ENCODE measurements at regions of chr10 and their contacts with region 1.

Region 1: DNA sequence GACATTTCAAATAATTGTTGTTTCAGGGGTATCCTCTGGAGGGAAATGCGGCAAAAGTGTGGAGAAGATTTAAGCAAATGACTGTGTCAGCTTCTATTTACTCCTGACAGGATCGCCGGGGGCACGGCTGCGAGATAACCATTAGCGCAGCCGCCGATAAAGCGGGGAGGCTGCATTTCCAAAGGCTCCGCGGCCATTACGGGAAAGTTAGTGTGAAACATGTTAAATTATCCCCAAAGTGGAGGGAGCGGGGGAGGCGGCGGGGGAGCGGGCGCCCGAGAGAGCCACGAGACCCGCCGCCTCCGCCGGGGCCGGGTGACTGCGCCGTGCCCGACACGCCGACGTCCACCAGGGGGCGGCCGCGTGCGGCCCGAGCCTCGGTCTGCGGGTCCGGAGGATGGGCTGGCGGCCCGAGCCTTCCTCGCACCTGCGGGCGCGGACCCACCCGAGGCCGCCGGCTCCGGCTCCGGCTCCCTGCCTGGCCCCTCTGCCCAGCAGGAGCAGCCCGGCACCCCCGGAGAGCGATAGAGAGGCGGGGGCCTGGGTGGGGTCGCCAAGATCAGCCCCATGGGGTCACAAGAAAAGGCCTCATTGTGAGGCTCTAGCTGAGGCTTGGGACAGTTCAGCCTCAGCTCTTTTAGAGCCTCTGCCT is 74.4 kb upstream of the PAX2 start:
- DNase-seq: peak; percentile 67
- ATAC-seq: peak; percentile 82
- H3K4me3 Mint-ChIP-seq: peak overlapping the region; percentile 32
- H3K27ac Mint-ChIP-seq: no peak overlapping the region
- H3K4me1 Mint-ChIP-seq: peaks cover 8% of the 10 kb centered on the region
- H3K27me3 Mint-ChIP-seq: peaks cover 58% of the 10 kb centered on the region
- CTCF ChIP-seq: no peak

Region 2: GRCh38 chr10:100625816-100626215 is 45.1 kb before region 1 on chr10:
- CTCF ChIA-PET with region 1: no interaction called
- POLR2A ChIA-PET with region 1: no interaction called
- intact Hi-C with region 1: no loop called
- DNase-seq: no peak
- ATAC-seq: no peak
- H3K4me3 Mint-ChIP-seq: no peak overlapping the region
- H3K27ac Mint-ChIP-seq: no peak overlapping the region
- H3K4me1 Mint-ChIP-seq: no peaks in the 10 kb centered on the region
- H3K27me3 Mint-ChIP-seq: peaks cover 45% of the 10 kb centered on the region
- CTCF ChIP-seq: no peak

Region 3: GRCh38 chr10:100872034-100872791 is 201.3 kb after region 1 on chr10:
- CTCF ChIA-PET with region 1: interaction called, 5 read pairs
- POLR2A ChIA-PET with region 1: no interaction called
- intact Hi-C with region 1: loop called (anchors 1 kb)
- DNase-seq: peak; percentile 37
- ATAC-seq: peak; percentile 65
- H3K4me3 Mint-ChIP-seq: no peak overlapping the region
- H3K27ac Mint-ChIP-seq: no peak overlapping the region
- H3K4me1 Mint-ChIP-seq: no peaks in the 10 kb centered on the region
- H3K27me3 Mint-ChIP-seq: peaks cover 23% of the 10 kb centered on the region
- CTCF ChIP-seq: no peak

Region 4: GRCh38 chr10:100878291-100878910 is 207.4 kb after region 1 on chr10:
- CTCF ChIA-PET with region 1: interaction called, 6 read pairs
- POLR2A ChIA-PET with region 1: no interaction called
- intact Hi-C with region 1: loop called (anchors 1 kb)
- DNase-seq: no peak
- ATAC-seq: peak; percentile 77
- H3K4me3 Mint-ChIP-seq: no peak overlapping the region
- H3K27ac Mint-ChIP-seq: no peak overlapping the region
- H3K4me1 Mint-ChIP-seq: no peaks in the 10 kb centered on the region
- H3K27me3 Mint-ChIP-seq: peaks cover 11% of the 10 kb centered on the region
- CTCF ChIP-seq: no peak

Region 5: DNA sequence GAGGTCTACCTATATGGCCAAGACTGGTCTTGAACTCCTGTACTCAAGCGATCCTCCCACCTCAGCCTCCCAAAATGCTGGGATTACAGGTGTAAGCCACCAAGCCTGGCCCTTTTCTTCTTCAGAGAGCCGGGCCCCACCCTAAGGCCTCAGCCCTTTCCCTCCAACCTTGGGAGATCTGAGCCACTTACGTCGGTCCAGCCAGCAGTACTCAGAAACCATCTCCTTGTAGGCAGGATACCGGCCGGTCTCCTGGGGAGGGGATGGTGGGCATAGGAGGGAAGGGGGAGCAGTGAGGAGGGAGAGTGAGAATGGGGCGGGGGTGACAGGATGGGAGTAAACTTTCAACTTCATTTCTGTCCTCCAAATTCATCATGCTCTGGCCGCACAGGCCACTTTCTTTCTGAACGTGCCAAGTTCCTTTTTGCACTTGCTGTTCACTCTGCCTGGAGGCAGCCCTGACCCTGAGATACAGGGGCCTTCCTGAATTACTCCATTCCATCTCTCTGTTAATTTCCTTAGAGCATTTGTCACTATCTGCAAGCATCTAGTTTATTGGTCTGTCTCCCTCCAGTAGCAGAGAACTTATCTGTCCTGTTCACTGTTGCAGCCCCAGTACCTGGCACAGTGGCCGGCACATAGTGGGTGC is 349.6 kb after region 1 on chr10:
- CTCF ChIA-PET with region 1: no interaction called
- POLR2A ChIA-PET with region 1: no interaction called
- intact Hi-C with region 1: no loop called
- DNase-seq: no peak
- ATAC-seq: no peak
- H3K4me3 Mint-ChIP-seq: no peak overlapping the region
- H3K27ac Mint-ChIP-seq: no peak overlapping the region
- H3K4me1 Mint-ChIP-seq: peaks cover 14% of the 10 kb centered on the region
- H3K27me3 Mint-ChIP-seq: peaks cover 25% of the 10 kb centered on the region
- CTCF ChIP-seq: no peak

Measured in activated B cell treated with CpG ODN at 0.5 μM for 24 hours (primary cell).